Endothelial cell of umbilical vein (primary cell): ENCODE measurements at regions of chr9 and their contacts with region 1.

Region 1: GRCh38 chr9:135602789-135603481 is 36.4 kb downstream of the GLT6D1 start:
- DNase-seq: peak; percentile 46
- H3K4me3 ChIP-seq: no peak overlapping the region
- H3K27ac ChIP-seq: no peak overlapping the region
- H3K4me1 ChIP-seq: no peaks in the 10 kb centered on the region
- H3K27me3 ChIP-seq: peaks cover 6% of the 10 kb centered on the region in 2 experiments
- CTCF ChIP-seq: peak; percentile 71 to 72
- POLR2A ChIP-seq: no peak

Region 2: DNA sequence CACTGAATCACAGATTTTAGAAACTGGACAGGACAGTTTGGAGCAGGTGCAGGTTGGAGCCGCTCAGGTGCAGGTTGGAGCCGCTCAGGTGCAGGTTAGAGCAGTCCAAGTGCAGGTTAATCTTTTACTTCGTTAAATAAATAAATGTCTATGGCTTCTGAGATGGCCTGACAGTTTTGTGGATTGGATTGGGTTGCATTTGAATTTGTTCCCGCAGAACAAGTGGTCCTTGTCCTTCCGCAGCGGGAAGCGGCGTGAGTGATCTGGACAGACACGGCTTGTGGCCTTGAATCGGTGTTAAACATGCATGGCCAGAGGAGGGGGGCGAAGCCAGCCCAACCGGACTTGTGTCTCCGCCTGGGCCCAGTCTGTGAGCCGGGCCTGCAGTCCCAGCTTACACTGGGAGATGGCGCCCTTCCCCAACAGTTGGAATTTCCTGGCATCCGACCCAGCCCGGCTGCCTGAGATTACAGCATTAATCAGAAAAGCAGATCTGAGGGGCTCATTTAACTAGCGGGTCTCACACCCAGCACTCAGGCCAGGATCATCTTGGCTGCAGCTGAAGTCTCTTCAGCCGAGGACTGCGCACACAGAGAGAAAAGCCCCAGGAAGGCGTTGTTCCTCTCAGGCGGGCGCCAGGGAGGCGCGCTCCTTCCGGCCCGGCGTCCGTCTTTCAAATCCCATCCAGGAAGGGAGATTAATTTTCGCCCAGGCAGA is 516.9 kb before region 1 on chr9:
- CTCF ChIA-PET with region 1: no interaction called
- POLR2A ChIA-PET with region 1: no interaction called
- dilution Hi-C with region 1: no loop called
- intact Hi-C with region 1: loop called (anchors 2 kb)
- DNase-seq: peak; percentile 72
- H3K4me3 ChIP-seq: no peak overlapping the region
- H3K27ac ChIP-seq: no peak overlapping the region
- H3K4me1 ChIP-seq: no peaks in the 10 kb centered on the region
- H3K27me3 ChIP-seq: peaks cover 15% of the 10 kb centered on the region in 2 experiments
- CTCF ChIP-seq: peak; percentile 89 to 90
- POLR2A ChIP-seq: no peak

Region 3: GRCh38 chr9:135701959-135702721 is 99.2 kb after region 1 on chr9 and contains the start of gene KCNT1:
- CTCF ChIA-PET with region 1: interaction called, 3 read pairs
- POLR2A ChIA-PET with region 1: no interaction called
- dilution Hi-C with region 1: no loop called
- intact Hi-C with region 1: loop called (anchors 5 kb)
- DNase-seq: peak; percentile 40
- H3K4me3 ChIP-seq: no peak within 1 kb of the TSS
- H3K27ac ChIP-seq: no peak within 1 kb of the TSS
- H3K4me1 ChIP-seq: peaks cover 2% of the 10 kb centered on the region
- H3K27me3 ChIP-seq: peaks cover 0 to 2% of the 10 kb centered on the region in 2 experiments
- CTCF ChIP-seq: peak; percentile 73 to 90
- POLR2A ChIP-seq: no peak
- total RNA-seq, gene KCNT1: not detected in 2 replicates

Region 4: DNA sequence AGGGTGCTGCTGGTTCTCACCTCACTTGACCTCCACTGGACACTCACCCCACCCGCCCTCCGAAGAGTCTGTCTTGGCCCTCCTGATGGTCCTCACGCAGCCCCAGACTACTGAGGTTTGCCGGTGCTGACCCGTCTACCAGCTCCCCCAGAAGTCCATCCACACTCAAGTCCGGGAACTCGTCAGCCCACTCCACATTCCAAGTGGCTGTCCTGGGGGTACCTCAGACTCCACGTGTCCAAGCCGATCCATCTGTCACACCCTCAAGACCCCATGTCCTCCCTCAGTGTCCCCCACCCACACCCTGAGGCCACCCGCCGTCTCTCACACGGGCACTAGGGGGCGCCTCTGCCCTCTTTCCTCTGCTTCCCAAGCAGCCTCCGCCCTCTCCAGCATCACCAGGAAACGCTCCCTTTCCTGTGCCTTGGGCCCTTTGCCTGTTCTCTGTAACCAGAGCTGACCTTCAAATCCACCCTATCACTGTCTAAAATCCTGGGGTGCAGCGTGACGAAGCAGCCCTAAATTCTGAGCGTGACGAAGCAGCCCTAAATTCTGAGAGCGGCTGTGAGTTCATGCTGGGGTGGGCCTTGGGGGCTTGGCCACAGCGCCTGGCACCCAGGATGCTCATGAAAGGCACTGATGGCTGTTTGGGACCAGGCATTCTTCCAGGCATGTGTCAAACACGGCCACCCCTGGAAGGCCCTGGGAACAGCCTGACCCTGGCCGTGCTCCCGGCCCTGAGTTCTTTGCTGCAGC is 194.8 kb after region 1 on chr9:
- CTCF ChIA-PET with region 1: no interaction called
- POLR2A ChIA-PET with region 1: no interaction called
- dilution Hi-C with region 1: no loop called
- intact Hi-C with region 1: loop called (anchors 5 kb)
- DNase-seq: peak; percentile 29
- H3K4me3 ChIP-seq: no peak overlapping the region
- H3K27ac ChIP-seq: no peak overlapping the region
- H3K4me1 ChIP-seq: peaks cover 4% of the 10 kb centered on the region
- H3K27me3 ChIP-seq: no peaks in the 10 kb centered on the region
- CTCF ChIP-seq: peak; percentile 88 to 91
- POLR2A ChIP-seq: no peak

Region 5: DNA sequence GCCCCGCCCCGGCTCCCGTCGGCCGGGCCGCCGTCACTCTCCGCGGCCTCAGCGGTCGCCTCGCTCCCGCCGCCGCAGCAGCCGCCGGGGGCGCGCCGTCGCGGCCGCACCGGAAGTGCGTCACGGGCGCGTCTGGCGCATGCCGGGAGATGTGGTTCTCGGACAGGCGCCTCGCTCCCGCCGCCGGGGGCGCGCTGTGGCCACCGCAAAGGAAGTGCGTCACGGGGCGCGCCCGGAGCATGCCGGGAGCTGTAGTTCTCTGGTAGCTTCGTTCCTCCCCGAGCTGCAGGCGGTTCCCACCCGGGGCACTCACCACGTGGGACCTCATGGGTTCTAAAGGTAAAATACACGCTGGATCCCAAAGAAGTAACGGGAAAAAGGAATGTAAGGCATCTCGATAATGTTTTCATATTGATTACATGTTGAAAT is 358.4 kb after region 1 on chr9 and contains the start of gene UBAC1:
- CTCF ChIA-PET with region 1: interaction called, 3 read pairs
- POLR2A ChIA-PET with region 1: no interaction called
- dilution Hi-C with region 1: no loop called
- intact Hi-C with region 1: loop called (anchors 5 kb)
- DNase-seq: peak; percentile 95
- H3K4me3 ChIP-seq: peak within 1 kb of the TSS; percentile 71 to 97 (median 78)
- H3K27ac ChIP-seq: no peak within 1 kb of the TSS
- H3K4me1 ChIP-seq: peaks cover 8% of the 10 kb centered on the region
- H3K27me3 ChIP-seq: no peaks in the 10 kb centered on the region
- CTCF ChIP-seq: peak; percentile 27 to 60
- POLR2A ChIP-seq: peak; percentile 32
- total RNA-seq, gene UBAC1: 36.5 and 39.5 TPM in 2 replicates

Region 6: GRCh38 chr9:136114610-136115009 is 511.7 kb after region 1 on chr9:
- CTCF ChIA-PET with region 1: no interaction called
- POLR2A ChIA-PET with region 1: no interaction called
- dilution Hi-C with region 1: no loop called
- intact Hi-C with region 1: no loop called
- DNase-seq: no peak
- H3K4me3 ChIP-seq: no peak overlapping the region
- H3K27ac ChIP-seq: no peak overlapping the region
- H3K4me1 ChIP-seq: peaks cover 14% of the 10 kb centered on the region
- H3K27me3 ChIP-seq: no peaks in the 10 kb centered on the region
- CTCF ChIP-seq: no peak
- POLR2A ChIP-seq: no peak